ENCODE measurements at regions of chr12 and their contacts with region 1.

Region 1: GRCh38 chr12:122752464-122753318 is at the start of gene DENR:
- DNase-seq: peak; percentile 97 to 99 (median 98)
- ATAC-seq: peak; percentile 97 to 99 (median 98)
- H3K4me3 ChIP-seq: peak within 1 kb of the TSS; percentile 65 to 99 (median 87)
- H3K27ac ChIP-seq: peak within 1 kb of the TSS; percentile 37 to 95 (median 83)
- H3K4me1 ChIP-seq: peaks cover 0 to 19% (median 8%) of the 10 kb centered on the region in 12 donors
- H3K27me3 ChIP-seq: no peaks in the 10 kb centered on the region
- CTCF ChIP-seq: peak; percentile 60 to 96 (median 84)
- POLR2A ChIP-seq: peak in 1 of 2 donors; percentile 89
- total RNA-seq, gene DENR: 13.3 to 32.7 (median 26.3) TPM

Region 2: GRCh38 chr12:122225683-122226407 is 526.8 kb before region 1 on chr12 and contains the start of gene DIABLO:
- intact Hi-C with region 1: loop called in 1 of 10 experiments (anchors 10 kb)
- DNase-seq: peak; percentile 100
- ATAC-seq: peak; percentile 98 to 99 (median 98)
- H3K4me3 ChIP-seq: peak within 1 kb of the TSS; percentile 70 to 99 (median 93)
- H3K27ac ChIP-seq: peak within 1 kb of the TSS; percentile 81 to 99 (median 96)
- H3K4me1 ChIP-seq: peaks cover 6 to 34% (median 26%) of the 10 kb centered on the region in 12 donors
- H3K27me3 ChIP-seq: no peaks in the 10 kb centered on the region
- CTCF ChIP-seq: no peak
- POLR2A ChIP-seq: peak; percentile 44 to 95
- total RNA-seq, gene DIABLO: 27.9 to 64.4 (median 34.8) TPM

Region 3: DNA sequence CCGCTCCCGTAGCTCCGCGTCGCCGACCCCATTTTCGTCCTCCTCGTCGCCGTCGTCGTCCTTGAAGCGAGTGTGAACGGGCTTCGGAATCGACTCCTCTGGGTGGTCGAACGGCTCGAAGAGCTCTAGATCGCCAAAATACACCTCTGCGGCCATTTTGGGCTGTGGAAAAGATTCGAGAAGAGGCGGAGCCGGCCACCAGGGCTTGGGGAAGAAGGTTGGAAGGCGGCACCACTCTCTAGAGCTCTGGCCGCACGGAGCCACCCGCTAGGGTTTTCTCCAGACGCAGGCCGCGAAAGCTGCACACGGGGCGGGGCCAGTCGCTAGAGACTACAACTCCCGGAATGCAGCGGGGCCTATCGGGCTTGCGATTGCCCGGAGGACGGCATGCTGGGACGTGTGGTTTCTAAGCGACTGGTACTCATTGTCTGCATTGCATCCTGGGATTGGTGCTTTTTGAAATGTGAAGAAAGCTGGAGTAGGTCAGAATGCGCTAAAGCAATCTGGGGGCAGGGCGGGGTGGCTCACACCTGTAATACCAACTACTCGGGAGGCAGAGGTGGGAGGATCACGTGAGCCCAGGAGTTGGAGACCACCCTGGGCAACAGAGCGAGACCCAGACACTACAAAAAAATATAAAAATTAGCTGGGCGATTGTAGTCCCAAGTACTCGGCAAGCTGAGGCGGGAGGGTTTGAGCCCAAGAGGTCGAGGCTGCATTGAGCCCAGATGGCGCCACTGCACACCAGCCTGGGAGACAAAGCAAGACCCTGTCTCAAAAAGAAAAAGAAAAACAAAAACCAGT is 251.8 kb before region 1 on chr12 and contains the start of gene ZCCHC8:
- intact Hi-C with region 1: loop called in 1 of 10 experiments (anchors 5 kb)
- DNase-seq: peak; percentile 96 to 98 (median 97)
- ATAC-seq: peak; percentile 98 to 100 (median 98)
- H3K4me3 ChIP-seq: peak within 1 kb of the TSS; percentile 17 to 95 (median 78)
- H3K27ac ChIP-seq: peak within 1 kb of the TSS; percentile 84 to 100 (median 96)
- H3K4me1 ChIP-seq: peaks cover 0 to 36% (median 28%) of the 10 kb centered on the region in 12 donors
- H3K27me3 ChIP-seq: no peaks in the 10 kb centered on the region
- CTCF ChIP-seq: no peak
- POLR2A ChIP-seq: peak; percentile 67 to 94
- total RNA-seq, gene ZCCHC8: 6.4 to 14.3 (median 8.0) TPM

Region 4: DNA sequence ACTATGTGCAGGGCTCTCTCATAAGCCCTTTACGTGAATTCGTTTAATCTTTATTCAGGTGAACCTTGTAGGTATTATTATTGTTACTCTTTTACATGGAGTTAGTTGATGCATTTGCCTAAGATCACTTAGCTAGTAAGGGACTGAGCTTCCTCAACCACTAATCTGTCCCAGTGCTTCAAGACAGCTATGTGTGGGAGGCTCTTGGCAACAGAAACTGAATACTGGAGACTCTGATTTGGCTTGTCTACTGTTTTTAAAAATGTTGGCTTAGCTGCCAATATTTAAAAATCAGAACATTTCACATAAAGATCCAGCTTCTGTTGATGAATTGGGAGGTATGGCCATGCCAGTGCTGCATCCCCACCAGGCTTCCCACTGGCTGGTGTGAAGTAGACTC is 218.8 kb before region 1 on chr12:
- intact Hi-C with region 1: loop called in 3 of 10 experiments (anchors 5 to 10 kb)
- DNase-seq: no peak
- ATAC-seq: peak in 1 of 4 donors; percentile 60
- H3K4me3 ChIP-seq: no peak overlapping the region
- H3K27ac ChIP-seq: no peak overlapping the region
- H3K4me1 ChIP-seq: no peaks in the 10 kb centered on the region
- H3K27me3 ChIP-seq: no peaks in the 10 kb centered on the region
- CTCF ChIP-seq: no peak
- POLR2A ChIP-seq: no peak

Region 5: DNA sequence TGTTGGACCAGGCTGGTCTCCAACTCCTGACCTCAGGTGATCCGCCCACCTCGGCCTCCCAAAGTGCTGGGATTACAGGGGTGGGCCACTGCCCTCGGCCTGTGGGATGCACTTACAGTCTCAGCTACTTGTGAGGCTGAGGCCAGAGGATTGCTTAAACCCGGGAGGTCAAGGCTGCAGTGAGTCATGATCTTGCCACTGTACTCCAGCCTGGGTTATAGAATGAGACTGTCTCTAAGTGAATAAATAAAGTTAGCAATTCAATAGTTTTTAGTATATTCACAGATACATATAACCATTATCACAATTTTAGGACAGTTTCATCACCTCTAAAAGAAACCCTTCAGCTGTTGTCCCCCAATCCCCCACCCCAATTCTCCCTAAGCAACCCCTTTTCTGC is 110.7 kb before region 1 on chr12:
- intact Hi-C with region 1: loop called (anchors 1 to 5 kb)
- DNase-seq: no peak
- ATAC-seq: no peak
- H3K4me3 ChIP-seq: no peak overlapping the region
- H3K27ac ChIP-seq: no peak overlapping the region
- H3K4me1 ChIP-seq: no peaks in the 10 kb centered on the region
- H3K27me3 ChIP-seq: no peaks in the 10 kb centered on the region
- CTCF ChIP-seq: no peak
- POLR2A ChIP-seq: no peak

Measured in heart left ventricle (tissue), 16 donors.